A673 (cell line): ENCODE measurements at regions of chr1 and their contacts with region 1.

Region 1: DNA sequence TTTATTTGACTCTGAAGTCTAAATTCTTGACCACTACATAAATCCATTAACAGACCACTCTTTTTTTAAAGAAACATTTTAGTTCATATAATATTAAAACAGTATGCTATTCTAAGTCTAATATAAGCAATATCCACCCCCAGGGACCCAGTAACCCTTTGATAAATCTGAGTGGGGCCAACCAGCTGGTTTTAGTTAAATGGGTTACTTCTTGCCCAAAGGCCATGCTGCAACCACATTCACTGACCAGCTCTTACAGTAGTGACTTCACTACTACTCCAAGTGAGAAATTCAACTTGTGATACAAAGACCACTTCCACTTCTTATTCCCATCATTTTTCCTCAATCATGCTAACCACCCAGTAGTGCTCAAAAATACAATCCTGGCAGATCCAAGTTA is 20.5 kb downstream of the FUBP1 start:
- DNase-seq: no peak
- H3K4me3 ChIP-seq: no peak overlapping the region
- H3K27ac ChIP-seq: no peak overlapping the region
- H3K4me1 ChIP-seq: no peaks in the 10 kb centered on the region
- H3K27me3 ChIP-seq: no peaks in the 10 kb centered on the region
- CTCF ChIP-seq: no peak

Region 2: GRCh38 chr1:77468257-77468948 is 490.0 kb before region 1 on chr1:
- CTCF ChIA-PET with region 1: no interaction called
- POLR2A ChIA-PET with region 1: no interaction called
- intact Hi-C with region 1: no loop called
- DNase-seq: no peak
- H3K4me3 ChIP-seq: no peak overlapping the region
- H3K27ac ChIP-seq: no peak overlapping the region
- H3K4me1 ChIP-seq: no peaks in the 10 kb centered on the region
- H3K27me3 ChIP-seq: no peaks in the 10 kb centered on the region
- CTCF ChIP-seq: no peak

Region 3: DNA sequence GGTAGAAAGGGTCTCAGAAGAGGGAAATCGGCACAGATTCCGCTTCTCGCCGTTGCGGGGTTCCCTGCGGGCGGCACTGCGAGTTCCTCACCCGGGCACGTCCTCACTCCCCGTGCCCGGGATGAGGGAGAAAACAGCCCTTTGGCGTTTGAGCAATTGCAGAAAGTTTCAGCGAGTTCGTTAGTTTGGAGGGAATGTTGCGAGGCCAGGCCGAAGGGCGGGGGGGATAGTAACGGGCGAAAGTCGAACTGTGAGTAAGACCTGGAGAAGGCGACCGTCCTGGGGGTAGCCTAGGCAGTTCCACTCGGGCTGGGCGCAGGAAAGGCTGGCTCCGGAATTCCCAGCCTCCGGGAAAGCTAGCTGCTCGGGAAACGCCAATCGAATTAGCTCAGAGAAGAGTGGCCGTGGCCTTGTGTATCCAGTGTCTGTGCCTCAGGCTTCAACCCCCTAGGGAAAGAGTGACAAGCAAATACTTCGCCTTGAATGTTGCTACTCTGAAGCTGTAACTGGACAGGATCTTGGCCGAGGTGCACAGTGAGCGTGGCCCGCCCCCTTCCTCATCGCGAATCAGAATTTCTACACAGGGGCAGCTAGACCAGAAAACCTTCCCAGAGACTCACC is 533.2 kb after region 1 on chr1:
- CTCF ChIA-PET with region 1: no interaction called
- POLR2A ChIA-PET with region 1: no interaction called
- intact Hi-C with region 1: no loop called
- DNase-seq: peak; percentile 59
- H3K4me3 ChIP-seq: peak overlapping the region; percentile 53
- H3K27ac ChIP-seq: peak overlapping the region; percentile 49
- H3K4me1 ChIP-seq: peaks cover 17% of the 10 kb centered on the region
- H3K27me3 ChIP-seq: no peaks in the 10 kb centered on the region
- CTCF ChIP-seq: no peak

Region 4: GRCh38 chr1:79478160-79478559 is 1519.8 kb after region 1 on chr1:
- CTCF ChIA-PET with region 1: no interaction called
- POLR2A ChIA-PET with region 1: interaction called, 10 read pairs
- intact Hi-C with region 1: no loop called
- DNase-seq: no peak
- H3K4me3 ChIP-seq: no peak overlapping the region
- H3K27ac ChIP-seq: no peak overlapping the region
- H3K4me1 ChIP-seq: no peaks in the 10 kb centered on the region
- H3K27me3 ChIP-seq: no peaks in the 10 kb centered on the region
- CTCF ChIP-seq: no peak